ENCODE measurements at regions of chr11 and their contacts with region 1.

Region 1: GRCh38 chr11:128645968-128646367 is 47.9 kb upstream of the FLI1 start:
- DNase-seq: no peak
- H3K4me3 ChIP-seq: no peak overlapping the region
- H3K27ac ChIP-seq: no peak overlapping the region
- H3K4me1 ChIP-seq: no peaks in the 10 kb centered on the region
- H3K27me3 ChIP-seq: no peaks in the 10 kb centered on the region
- CTCF ChIP-seq: no peak
- POLR2A ChIP-seq: no peak

Region 2: GRCh38 chr11:128660947-128661346 is 15.0 kb after region 1 on chr11:
- intact Hi-C with region 1: loop called (anchors 1 kb)
- DNase-seq: no peak
- H3K4me3 ChIP-seq: no peak overlapping the region
- H3K27ac ChIP-seq: no peak overlapping the region
- H3K4me1 ChIP-seq: no peaks in the 10 kb centered on the region
- H3K27me3 ChIP-seq: peaks cover 0 to 10% of the 10 kb centered on the region in 2 donors
- CTCF ChIP-seq: no peak
- POLR2A ChIP-seq: no peak